Caco-2 (cell line): ENCODE measurements at regions of chr2 and their contacts with region 1.

Region 1: GRCh38 chr2:69643602-69644505 is at the start of gene AAK1:
- DNase-seq: peak; percentile 91 to 92
- H3K4me3 ChIP-seq: peak within 1 kb of the TSS; percentile 85
- H3K4me3 Mint-ChIP-seq: peak within 1 kb of the TSS; percentile 96
- H3K27ac Mint-ChIP-seq: peak within 1 kb of the TSS; percentile 98
- H3K4me1 ChIP-seq: peaks cover 24% of the 10 kb centered on the region
- H3K4me1 Mint-ChIP-seq: peaks cover 56% of the 10 kb centered on the region
- H3K27me3 ChIP-seq: no peaks in the 10 kb centered on the region
- H3K27me3 Mint-ChIP-seq: no peaks in the 10 kb centered on the region
- CTCF ChIP-seq: no peak
- total RNA-seq, gene AAK1: 39.7 and 50.8 TPM in 2 replicates

Region 2: DNA sequence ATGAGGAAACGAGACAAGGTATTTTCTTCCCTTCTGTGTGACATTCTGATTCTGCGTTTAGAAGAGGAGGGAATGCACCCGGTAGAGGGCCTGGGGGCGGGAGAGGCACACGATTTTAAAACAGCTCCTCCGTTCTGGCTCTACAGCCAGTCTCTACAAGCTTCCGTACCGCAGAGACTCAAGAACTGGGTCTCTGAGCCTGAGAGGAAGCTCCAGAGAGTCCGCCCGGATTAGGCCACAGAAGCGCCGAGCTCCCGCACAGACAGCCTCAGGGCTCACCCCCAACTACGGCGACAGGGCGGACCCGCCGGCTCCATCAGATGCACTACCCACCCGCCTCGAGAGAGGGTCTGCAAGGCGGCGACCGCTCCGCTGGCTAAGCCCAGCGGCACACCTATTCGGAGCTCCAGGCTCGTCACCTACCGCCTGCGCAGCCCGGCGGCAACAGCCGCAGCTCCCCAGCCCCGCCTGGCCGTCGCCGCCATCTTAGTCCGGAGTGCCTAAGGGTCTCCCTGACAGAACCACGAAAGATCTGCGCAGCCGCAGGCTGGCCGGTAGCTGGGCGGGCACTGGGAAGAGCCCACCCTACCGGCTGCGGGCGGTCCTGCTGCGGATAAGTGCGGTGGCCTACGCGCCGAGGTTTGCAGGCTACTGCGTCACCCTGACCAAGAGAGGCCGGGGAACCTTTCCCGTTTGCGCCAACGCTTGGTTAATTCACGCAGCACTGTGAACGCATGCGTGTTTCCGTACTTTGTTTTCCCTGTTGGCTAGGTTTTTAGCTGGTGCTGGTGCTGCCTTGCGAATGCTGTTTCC is 206.7 kb before region 1 on chr2 and contains the start of gene NFU1:
- CTCF ChIA-PET with region 1: no interaction called
- POLR2A ChIA-PET with region 1: no interaction called
- intact Hi-C with region 1: loop called (anchors 5 kb)
- DNase-seq: peak; percentile 94 to 97
- H3K4me3 ChIP-seq: peak within 1 kb of the TSS; percentile 51
- H3K4me3 Mint-ChIP-seq: peak within 1 kb of the TSS; percentile 75
- H3K27ac Mint-ChIP-seq: peak within 1 kb of the TSS; percentile 88
- H3K4me1 ChIP-seq: peaks cover 15% of the 10 kb centered on the region
- H3K4me1 Mint-ChIP-seq: peaks cover 7% of the 10 kb centered on the region
- H3K27me3 ChIP-seq: no peaks in the 10 kb centered on the region
- H3K27me3 Mint-ChIP-seq: no peaks in the 10 kb centered on the region
- CTCF ChIP-seq: peak; percentile 68 to 87
- total RNA-seq, gene NFU1: 72.5 and 85.3 TPM in 2 replicates

Region 3: GRCh38 chr2:69559442-69560146 is 84.3 kb before region 1 on chr2:
- CTCF ChIA-PET with region 1: interaction called, 3 read pairs
- POLR2A ChIA-PET with region 1: no interaction called
- intact Hi-C with region 1: loop called (anchors 1 kb)
- DNase-seq: peak in 1 of 2 experiments; percentile 65
- H3K4me3 ChIP-seq: no peak overlapping the region
- H3K4me3 Mint-ChIP-seq: no peak overlapping the region
- H3K27ac Mint-ChIP-seq: no peak overlapping the region
- H3K4me1 ChIP-seq: peaks cover 16% of the 10 kb centered on the region
- H3K4me1 Mint-ChIP-seq: peaks cover 33% of the 10 kb centered on the region
- H3K27me3 ChIP-seq: no peaks in the 10 kb centered on the region
- H3K27me3 Mint-ChIP-seq: no peaks in the 10 kb centered on the region
- CTCF ChIP-seq: peak; percentile 71 to 83

Region 4: GRCh38 chr2:69581774-69582581 is 61.9 kb before region 1 on chr2:
- CTCF ChIA-PET with region 1: no interaction called
- POLR2A ChIA-PET with region 1: interaction called, 13 read pairs
- intact Hi-C with region 1: no loop called
- DNase-seq: peak; percentile 66 to 67
- H3K4me3 ChIP-seq: no peak overlapping the region
- H3K4me3 Mint-ChIP-seq: peak overlapping the region; percentile 23
- H3K27ac Mint-ChIP-seq: peak overlapping the region; percentile 54
- H3K4me1 ChIP-seq: peaks cover 25% of the 10 kb centered on the region
- H3K4me1 Mint-ChIP-seq: peaks cover 46% of the 10 kb centered on the region
- H3K27me3 ChIP-seq: no peaks in the 10 kb centered on the region
- H3K27me3 Mint-ChIP-seq: no peaks in the 10 kb centered on the region
- CTCF ChIP-seq: no peak

Region 5: GRCh38 chr2:69619725-69620124 is 24.1 kb before region 1 on chr2:
- CTCF ChIA-PET with region 1: no interaction called
- POLR2A ChIA-PET with region 1: no interaction called
- intact Hi-C with region 1: no loop called
- DNase-seq: no peak
- H3K4me3 ChIP-seq: no peak overlapping the region
- H3K4me3 Mint-ChIP-seq: no peak overlapping the region
- H3K27ac Mint-ChIP-seq: no peak overlapping the region
- H3K4me1 ChIP-seq: peaks cover 38% of the 10 kb centered on the region
- H3K4me1 Mint-ChIP-seq: peaks cover 15% of the 10 kb centered on the region
- H3K27me3 ChIP-seq: no peaks in the 10 kb centered on the region
- H3K27me3 Mint-ChIP-seq: no peaks in the 10 kb centered on the region
- CTCF ChIP-seq: no peak

Region 6: GRCh38 chr2:69716555-69717114 is 72.8 kb after region 1 on chr2:
- CTCF ChIA-PET with region 1: no interaction called
- POLR2A ChIA-PET with region 1: no interaction called
- intact Hi-C with region 1: loop called (anchors 1 kb)
- DNase-seq: no peak
- H3K4me3 ChIP-seq: no peak overlapping the region
- H3K4me3 Mint-ChIP-seq: no peak overlapping the region
- H3K27ac Mint-ChIP-seq: no peak overlapping the region
- H3K4me1 ChIP-seq: no peaks in the 10 kb centered on the region
- H3K4me1 Mint-ChIP-seq: no peaks in the 10 kb centered on the region
- H3K27me3 ChIP-seq: no peaks in the 10 kb centered on the region
- H3K27me3 Mint-ChIP-seq: no peaks in the 10 kb centered on the region
- CTCF ChIP-seq: no peak